Panc1 (cell line): ENCODE measurements at regions of chrX and their contacts with region 1.

Region 1: GRCh38 chrX:20362268-20363267 is 95.9 kb upstream of the RPS6KA3 start:
- DNase-seq: no peak
- ATAC-seq: peak; percentile 91
- H3K4me3 ChIP-seq: peak overlapping the region; percentile 13 to 45
- H3K27ac ChIP-seq: peak overlapping the region; percentile 85
- H3K4me1 ChIP-seq: peaks cover 2% of the 10 kb centered on the region; the same call in 1 of the 2 replicates
- H3K27me3 ChIP-seq: no peaks in the 10 kb centered on the region
- CTCF ChIP-seq: no peak

Region 2: GRCh38 chrX:20244931-20245330 is 117.6 kb before region 1 on chrX:
- CTCF ChIA-PET with region 1: no interaction called
- POLR2A ChIA-PET with region 1: no interaction called
- in situ Hi-C with region 1: no loop called
- intact Hi-C with region 1: no loop called
- DNase-seq: no peak
- ATAC-seq: no peak
- H3K4me3 ChIP-seq: no peak overlapping the region
- H3K27ac ChIP-seq: no peak overlapping the region
- H3K4me1 ChIP-seq: no peaks in the 10 kb centered on the region
- H3K27me3 ChIP-seq: no peaks in the 10 kb centered on the region
- CTCF ChIP-seq: no peak

Region 3: GRCh38 chrX:20266810-20267606 is 95.6 kb before region 1 on chrX and contains the start of gene RPS6KA3:
- CTCF ChIA-PET with region 1: no interaction called
- POLR2A ChIA-PET with region 1: no interaction called
- in situ Hi-C with region 1: no loop called
- intact Hi-C with region 1: loop called (anchors 5 kb)
- DNase-seq: no peak
- ATAC-seq: peak; percentile 93
- H3K4me3 ChIP-seq: peak within 1 kb of the TSS; percentile 60 to 70
- H3K27ac ChIP-seq: peak within 1 kb of the TSS; percentile 72
- H3K4me1 ChIP-seq: peaks cover 8% of the 10 kb centered on the region
- H3K27me3 ChIP-seq: no peaks in the 10 kb centered on the region
- CTCF ChIP-seq: no peak
- total RNA-seq, gene RPS6KA3: 40.5 TPM

Region 4: DNA sequence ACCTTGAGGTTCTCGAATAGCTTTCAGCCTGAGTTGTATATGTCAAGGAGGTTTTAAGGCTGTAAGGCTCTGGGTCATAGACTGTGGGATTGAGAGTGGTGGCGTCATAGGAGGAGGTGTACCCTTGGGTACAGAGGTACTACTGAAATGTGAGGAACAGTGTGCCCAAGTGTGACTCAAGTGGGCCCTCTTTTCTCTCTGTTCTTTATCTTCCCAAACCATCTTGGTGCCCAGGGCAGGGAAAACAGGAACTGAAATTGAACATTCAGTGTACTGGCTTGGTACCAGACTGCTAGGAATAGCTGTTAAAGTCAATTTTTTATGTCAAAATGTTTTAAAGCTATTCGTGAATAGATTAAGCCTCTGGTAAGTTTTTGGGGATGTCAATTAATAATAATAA is 40.4 kb after region 1 on chrX:
- CTCF ChIA-PET with region 1: no interaction called
- POLR2A ChIA-PET with region 1: no interaction called
- in situ Hi-C with region 1: no loop called
- intact Hi-C with region 1: no loop called
- DNase-seq: no peak
- ATAC-seq: no peak
- H3K4me3 ChIP-seq: no peak overlapping the region
- H3K27ac ChIP-seq: no peak overlapping the region
- H3K4me1 ChIP-seq: no peaks in the 10 kb centered on the region
- H3K27me3 ChIP-seq: no peaks in the 10 kb centered on the region
- CTCF ChIP-seq: no peak